Posterior vena cava (tissue), 2 donors: ENCODE measurements at regions of chr1 and their contacts with region 1.

Region 1: DNA sequence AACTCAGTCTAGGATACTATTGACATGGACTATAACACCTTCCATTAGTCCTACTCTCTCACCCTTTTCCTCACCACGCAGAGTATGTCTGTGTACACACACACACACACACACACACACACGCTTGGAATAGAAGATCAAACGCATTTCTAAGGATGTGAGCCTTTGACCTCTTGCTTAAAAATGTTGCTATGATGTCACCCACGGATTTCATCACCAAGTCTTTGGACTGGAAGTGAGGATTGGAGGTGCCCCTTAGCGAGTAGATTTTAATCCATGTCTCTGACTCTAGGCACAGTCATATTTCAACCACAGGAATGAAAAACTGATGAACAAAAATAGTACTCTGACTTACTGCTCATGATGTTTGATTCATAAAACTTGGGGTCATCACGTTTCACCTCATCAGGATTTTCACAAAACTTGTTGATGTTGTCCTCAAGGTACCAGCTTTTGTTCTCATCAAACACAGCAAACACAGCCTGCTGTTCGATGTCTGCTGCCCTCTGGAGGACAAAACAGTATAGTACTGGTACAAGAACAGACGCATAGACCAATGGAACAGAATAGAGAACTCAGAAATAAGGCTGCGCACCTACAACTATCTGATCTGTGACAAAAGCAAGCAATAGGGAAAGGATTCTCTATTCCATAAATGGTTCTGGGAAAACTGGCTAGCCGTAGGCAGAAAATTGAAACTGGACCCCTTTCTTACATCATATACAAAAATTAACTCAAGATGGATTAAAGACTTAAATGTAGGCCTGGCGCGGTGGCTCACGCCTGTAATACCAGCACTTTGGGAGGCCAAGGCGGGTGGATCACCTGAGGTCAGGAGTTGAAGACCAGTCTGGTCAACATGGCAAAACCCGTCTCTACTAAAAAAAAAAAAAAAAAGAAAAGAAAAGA is 39.9 kb downstream of the F5 start:
- DNase-seq: no peak

Region 2: GRCh38 chr1:169371404-169371803 is 174.9 kb before region 1 on chr1:
- intact Hi-C with region 1: loop called in 1 of 2 experiments (anchors 10 kb)
- DNase-seq: no peak

Region 3: GRCh38 chr1:169466259-169467230 is 79.8 kb before region 1 on chr1:
- intact Hi-C with region 1: loop called in 1 of 2 experiments (anchors 5 kb)
- DNase-seq: no peak